Panc1 (cell line): ENCODE measurements at regions of chr2 and their contacts with region 1.

Region 1: DNA sequence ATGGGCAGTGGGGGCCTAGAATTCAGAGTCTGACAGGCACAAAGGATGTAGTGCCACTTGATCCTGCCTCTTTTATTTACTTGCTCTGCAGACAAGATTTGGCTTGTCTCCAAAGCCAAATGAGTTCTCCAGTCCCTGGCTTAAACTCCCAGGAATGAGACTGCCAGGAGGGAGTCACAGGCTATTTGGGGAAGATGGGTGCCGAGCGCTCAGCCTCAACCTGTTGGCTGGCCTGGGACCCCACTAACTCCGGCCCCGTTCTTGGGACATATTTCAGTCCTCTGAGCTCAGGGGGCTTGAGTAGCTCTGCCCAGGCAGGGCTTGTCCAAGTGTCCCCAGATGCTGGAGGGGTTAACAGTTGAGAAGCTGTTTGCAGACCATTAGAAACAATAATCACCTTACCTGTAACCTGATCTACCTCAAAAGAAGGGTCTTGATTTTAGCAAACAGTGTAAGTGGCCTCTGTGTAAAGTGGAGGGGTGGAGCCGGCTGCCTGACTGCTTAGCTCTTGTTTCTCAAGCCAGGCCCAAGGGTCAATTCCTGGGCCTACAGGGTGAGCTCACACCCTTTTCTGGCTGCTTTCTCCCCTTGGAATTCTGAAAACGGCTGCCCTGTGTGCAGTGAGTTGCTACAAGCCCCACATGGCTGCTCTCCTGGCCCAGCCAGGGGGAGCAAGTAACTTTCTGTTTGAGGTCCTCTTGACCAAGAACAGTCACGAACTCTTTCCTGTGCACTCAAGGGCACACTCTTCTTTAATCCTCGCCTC is 27.1 kb upstream of the FZD5 start:
- DNase-seq: no peak
- ATAC-seq: peak; percentile 35; the same call in 1 of the 2 replicates
- H3K4me3 ChIP-seq: no peak overlapping the region
- H3K27ac ChIP-seq: no peak overlapping the region
- H3K4me1 ChIP-seq: no peaks in the 10 kb centered on the region
- H3K27me3 ChIP-seq: no peaks in the 10 kb centered on the region
- CTCF ChIP-seq: no peak

Region 2: GRCh38 chr2:205957452-205958154 is 1839.2 kb before region 1 on chr2:
- CTCF ChIA-PET with region 1: no interaction called
- POLR2A ChIA-PET with region 1: interaction called, 13 read pairs
- in situ Hi-C with region 1: no loop called
- intact Hi-C with region 1: no loop called
- DNase-seq: no peak
- ATAC-seq: no peak
- H3K4me3 ChIP-seq: no peak overlapping the region
- H3K27ac ChIP-seq: no peak overlapping the region
- H3K4me1 ChIP-seq: no peaks in the 10 kb centered on the region
- H3K27me3 ChIP-seq: no peaks in the 10 kb centered on the region
- CTCF ChIP-seq: no peak

Region 3: DNA sequence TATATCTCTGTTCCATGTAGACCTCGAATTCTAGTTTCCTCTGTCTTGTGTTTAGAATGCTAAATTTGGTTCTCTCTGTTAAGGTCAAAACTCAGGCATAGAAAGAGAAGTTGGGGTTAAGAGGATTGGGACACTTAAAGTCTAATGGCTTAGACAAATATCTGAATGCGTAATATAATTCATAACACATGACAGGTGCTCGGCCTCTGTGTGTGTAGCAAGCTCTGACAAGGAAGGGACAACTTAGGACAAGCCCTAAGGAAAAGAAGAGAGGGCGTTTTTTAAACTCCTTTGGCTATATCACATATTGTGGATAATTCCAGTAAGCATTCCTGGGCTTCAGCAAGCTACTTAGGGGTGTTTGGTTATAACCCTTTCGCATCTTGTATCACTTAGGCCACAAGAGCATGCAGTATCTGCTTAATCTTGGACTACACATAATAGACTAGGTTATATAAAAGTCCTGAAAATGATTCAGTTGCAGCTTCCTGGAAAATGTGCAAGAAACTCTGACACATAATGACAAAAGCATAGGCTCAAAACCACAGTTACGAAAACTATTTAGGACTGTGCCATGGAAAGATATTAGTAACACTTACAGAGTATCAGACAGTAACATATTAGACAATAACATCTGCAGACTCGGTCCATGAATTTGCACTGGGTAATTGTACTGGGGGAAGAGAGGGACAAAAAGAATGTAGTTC is 283.1 kb before region 1 on chr2:
- CTCF ChIA-PET with region 1: no interaction called
- POLR2A ChIA-PET with region 1: no interaction called
- in situ Hi-C with region 1: no loop called
- intact Hi-C with region 1: no loop called
- DNase-seq: peak; percentile 87
- ATAC-seq: peak; percentile 85
- H3K4me3 ChIP-seq: no peak overlapping the region
- H3K27ac ChIP-seq: no peak overlapping the region
- H3K4me1 ChIP-seq: peaks cover 6% of the 10 kb centered on the region; the same call in 1 of the 2 replicates
- H3K27me3 ChIP-seq: no peaks in the 10 kb centered on the region
- CTCF ChIP-seq: no peak

Region 4: GRCh38 chr2:208040199-208041171 is 243.7 kb after region 1 on chr2:
- CTCF ChIA-PET with region 1: interaction called, 10 read pairs
- POLR2A ChIA-PET with region 1: no interaction called
- in situ Hi-C with region 1: no loop called
- intact Hi-C with region 1: no loop called
- DNase-seq: no peak
- ATAC-seq: peak; percentile 82
- H3K4me3 ChIP-seq: no peak overlapping the region
- H3K27ac ChIP-seq: no peak overlapping the region
- H3K4me1 ChIP-seq: no peaks in the 10 kb centered on the region; the same call in 1 of the 2 replicates
- H3K27me3 ChIP-seq: no peaks in the 10 kb centered on the region
- CTCF ChIP-seq: peak; percentile 78